ENCODE measurements at regions of chr6 and their contacts with region 1.

Region 1: GRCh38 chr6:5302995-5303622 is 41.8 kb downstream of the FARS2 start:
- DNase-seq: peak; percentile 77
- CTCF ChIP-seq: peak; percentile 81

Region 2: DNA sequence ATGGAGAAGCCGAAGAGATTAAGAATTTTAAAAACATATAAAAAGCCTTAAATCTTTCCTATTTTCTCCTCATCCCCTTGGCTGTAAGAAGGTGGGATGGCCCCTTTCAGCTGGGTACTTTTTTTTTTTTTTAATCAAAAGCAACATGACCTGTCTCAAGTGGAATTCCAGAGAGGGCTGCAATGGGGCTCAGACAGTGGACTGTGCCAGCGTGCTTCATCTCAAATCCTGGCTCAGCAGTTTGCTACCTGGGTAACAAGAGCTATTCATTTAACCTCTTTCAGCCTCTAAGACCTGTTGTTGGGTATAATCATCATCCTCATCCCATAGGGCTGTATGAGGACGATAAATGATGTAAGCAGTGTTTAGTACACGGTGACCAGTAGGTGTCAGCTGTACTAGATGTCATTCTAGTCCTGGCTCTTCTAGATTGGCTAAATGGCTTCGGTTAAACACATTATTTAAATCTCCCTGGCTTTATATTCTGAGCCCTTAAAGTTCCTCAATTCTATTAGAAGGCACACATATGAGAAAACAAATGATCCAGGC is 224.9 kb before region 1 on chr6:
- CTCF ChIA-PET with region 1: no interaction called
- POLR2A ChIA-PET with region 1: no interaction called
- DNase-seq: peak; percentile 47
- CTCF ChIP-seq: peak; percentile 42

Region 3: GRCh38 chr6:5174244-5174643 is 128.9 kb before region 1 on chr6:
- CTCF ChIA-PET with region 1: interaction called, 12 read pairs
- POLR2A ChIA-PET with region 1: no interaction called
- DNase-seq: peak; percentile 62
- CTCF ChIP-seq: no peak

Region 4: GRCh38 chr6:5197084-5197483 is 106.0 kb before region 1 on chr6:
- CTCF ChIA-PET with region 1: no interaction called
- POLR2A ChIA-PET with region 1: no interaction called
- DNase-seq: no peak
- CTCF ChIP-seq: no peak

Region 5: DNA sequence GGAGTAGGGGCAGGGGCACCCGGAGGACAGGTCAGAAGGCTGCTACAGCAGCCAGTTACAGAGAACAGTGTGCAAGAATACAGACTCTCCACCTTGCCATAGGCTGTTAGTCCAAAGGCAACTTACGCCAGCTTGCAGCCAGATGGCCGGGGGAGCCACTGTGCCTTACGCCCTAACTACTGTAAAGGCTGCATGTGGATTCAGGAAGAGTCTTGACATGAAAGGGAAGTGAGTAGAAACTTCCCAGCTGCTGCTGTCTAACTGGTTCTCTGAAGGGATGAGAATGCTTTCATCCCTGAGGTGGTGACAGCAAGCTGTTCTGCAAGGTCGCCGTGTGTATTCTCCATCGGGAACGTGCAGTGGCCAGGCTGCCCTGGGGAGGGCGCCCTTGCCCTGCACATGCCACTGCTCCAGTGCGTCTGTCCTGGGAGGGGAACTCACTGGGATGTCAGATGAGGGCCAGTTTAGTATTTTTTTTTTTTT is 88.5 kb before region 1 on chr6:
- CTCF ChIA-PET with region 1: interaction called, 15 read pairs
- POLR2A ChIA-PET with region 1: no interaction called
- DNase-seq: no peak
- CTCF ChIP-seq: peak; percentile 58

Region 6: GRCh38 chr6:5266423-5266822 is 36.7 kb before region 1 on chr6:
- CTCF ChIA-PET with region 1: interaction called, 13 read pairs
- POLR2A ChIA-PET with region 1: no interaction called
- DNase-seq: no peak
- CTCF ChIP-seq: no peak

Region 7: GRCh38 chr6:5287205-5287965 is 15.7 kb before region 1 on chr6:
- CTCF ChIA-PET with region 1: interaction called, 14 read pairs
- POLR2A ChIA-PET with region 1: no interaction called
- DNase-seq: no peak
- CTCF ChIP-seq: no peak

Region 8: DNA sequence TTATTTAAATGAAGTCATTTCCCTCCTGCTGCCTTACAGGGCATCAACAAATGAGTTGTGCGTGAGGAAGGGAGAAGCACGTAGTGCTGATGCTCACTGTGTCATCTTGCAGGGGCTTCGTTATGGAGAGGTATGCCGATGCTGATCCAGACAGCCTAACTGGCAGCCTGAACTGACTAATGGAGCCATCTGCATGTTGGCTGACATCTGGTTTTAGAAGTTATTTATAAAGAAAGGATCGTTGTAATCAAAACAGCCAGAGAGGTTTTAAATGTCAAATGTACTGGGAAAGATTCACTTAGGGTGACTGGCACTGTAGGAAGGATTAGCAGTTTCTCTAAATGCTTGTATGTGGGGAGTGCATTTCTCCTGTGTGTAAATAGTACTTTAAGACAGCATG is 12.8 kb after region 1 on chr6:
- CTCF ChIA-PET with region 1: interaction called, 18 read pairs
- POLR2A ChIA-PET with region 1: no interaction called
- DNase-seq: no peak
- CTCF ChIP-seq: no peak

Region 9: DNA sequence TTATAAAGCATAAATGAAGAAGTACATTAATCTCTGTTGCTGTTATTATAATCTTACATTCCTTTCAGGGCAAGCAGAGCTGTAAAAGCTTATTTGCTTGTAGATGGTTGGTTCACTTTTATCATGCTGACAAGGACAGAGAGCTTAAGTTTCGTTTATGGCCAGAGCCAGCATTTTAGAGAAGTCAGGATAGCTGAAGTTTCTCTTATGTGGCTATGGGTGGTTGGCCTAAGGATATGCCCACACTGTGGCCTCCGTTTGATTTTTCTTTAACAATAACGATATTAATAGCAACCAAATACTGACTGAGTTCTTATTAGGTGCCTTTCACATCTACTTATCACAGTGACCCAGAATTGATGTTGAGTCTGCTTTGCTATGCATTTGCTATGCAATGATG is 36.7 kb after region 1 on chr6:
- CTCF ChIA-PET with region 1: interaction called, 13 read pairs
- POLR2A ChIA-PET with region 1: no interaction called
- DNase-seq: no peak
- CTCF ChIP-seq: no peak